Esophagus squamous epithelium (tissue), 5 donors: ENCODE measurements at regions of chr1 and their contacts with region 1.

Region 1: DNA sequence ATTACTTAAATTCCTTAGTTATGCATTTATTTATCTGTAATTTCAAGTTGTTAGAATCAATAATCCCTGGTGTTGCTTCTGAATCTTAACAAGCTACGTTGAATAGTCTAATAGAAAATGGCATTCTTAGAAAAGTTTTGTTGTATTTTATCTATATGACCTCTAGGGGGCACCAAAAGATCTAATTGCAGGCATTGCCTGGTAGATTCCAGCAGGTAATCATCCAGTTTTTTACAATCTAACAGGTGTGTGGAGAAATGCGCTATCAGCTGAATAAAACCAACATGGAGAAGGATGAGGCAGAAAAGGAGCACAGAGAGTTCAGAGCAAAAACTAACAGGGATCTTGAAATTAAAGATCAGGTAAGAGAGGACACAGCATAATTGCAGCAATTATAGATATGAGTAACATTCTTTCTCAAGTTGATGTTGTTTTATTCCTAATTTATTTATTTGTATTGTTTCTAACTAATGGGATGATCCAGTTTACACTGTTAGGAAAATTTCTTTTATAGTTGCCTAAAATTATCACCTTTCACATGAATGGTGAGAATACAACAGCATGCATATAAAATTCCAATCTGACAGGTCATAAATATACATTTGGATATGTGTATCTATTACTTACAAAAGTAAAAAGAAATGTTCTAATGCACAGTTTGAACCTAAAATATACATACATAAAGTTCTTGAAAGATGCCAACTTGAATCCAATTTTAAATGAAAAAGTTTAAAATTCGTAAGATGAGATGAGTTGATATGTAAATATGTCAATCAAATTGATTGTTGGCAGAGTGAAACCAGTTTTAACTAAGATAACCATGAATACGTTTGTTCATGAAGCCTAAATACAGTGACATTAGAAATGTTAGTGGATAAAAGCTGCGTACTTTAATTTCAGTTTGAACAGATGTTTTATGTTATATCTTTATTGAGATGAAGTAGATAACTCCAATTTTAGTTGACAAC is 88.4 kb downstream of the SDCCAG8 start:
- DNase-seq: no peak
- H3K4me3 ChIP-seq: no peak overlapping the region
- H3K27ac ChIP-seq: no peak overlapping the region
- H3K4me1 ChIP-seq: no peaks in the 10 kb centered on the region
- H3K27me3 ChIP-seq: no peaks in the 10 kb centered on the region
- CTCF ChIP-seq: peak; percentile 24 to 75 (median 67)
- POLR2A ChIP-seq: no peak

Region 2: GRCh38 chr1:243287652-243288051 is 56.6 kb before region 1 on chr1:
- intact Hi-C with region 1: no loop called
- DNase-seq: no peak
- H3K4me3 ChIP-seq: no peak overlapping the region
- H3K27ac ChIP-seq: peak overlapping the region in 3 of 4 donors; percentile 3 to 49 (median 12)
- H3K4me1 ChIP-seq: peaks cover 0 to 15% (median 4%) of the 10 kb centered on the region in 3 donors
- H3K27me3 ChIP-seq: no peaks in the 10 kb centered on the region
- CTCF ChIP-seq: no peak
- POLR2A ChIP-seq: no peak

Region 3: DNA sequence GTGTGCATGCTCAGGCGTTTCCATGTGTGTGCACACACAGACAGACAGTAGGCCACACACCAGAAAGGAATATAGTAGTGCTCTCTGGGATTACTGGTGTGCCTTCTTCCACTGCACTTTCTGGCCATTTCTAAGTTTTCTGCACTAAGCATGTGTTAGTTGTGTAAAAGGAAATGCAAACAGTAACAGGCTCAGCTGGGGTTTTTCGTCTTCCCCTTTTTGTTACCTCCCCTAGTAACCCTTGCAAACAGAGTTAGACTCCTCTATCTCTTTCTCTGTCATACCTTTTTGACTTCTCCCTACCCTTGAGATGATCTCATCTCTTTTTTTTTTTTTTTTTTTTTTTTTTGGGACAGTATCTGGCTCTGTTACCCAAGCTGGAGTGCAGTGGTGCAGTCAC is 107.8 kb after region 1 on chr1:
- intact Hi-C with region 1: no loop called
- DNase-seq: no peak
- H3K4me3 ChIP-seq: no peak overlapping the region
- H3K27ac ChIP-seq: no peak overlapping the region
- H3K4me1 ChIP-seq: peaks cover 0 to 18% (median 10%) of the 10 kb centered on the region in 3 donors
- H3K27me3 ChIP-seq: no peaks in the 10 kb centered on the region
- CTCF ChIP-seq: no peak
- POLR2A ChIP-seq: no peak

Region 4: GRCh38 chr1:243482141-243483022 is 138.1 kb after region 1 on chr1:
- intact Hi-C with region 1: no loop called
- DNase-seq: no peak
- H3K4me3 ChIP-seq: peak overlapping the region; percentile 10 to 62 (median 34)
- H3K27ac ChIP-seq: no peak overlapping the region
- H3K4me1 ChIP-seq: peaks cover 5 to 20% (median 7%) of the 10 kb centered on the region in 3 donors
- H3K27me3 ChIP-seq: no peaks in the 10 kb centered on the region
- CTCF ChIP-seq: no peak
- POLR2A ChIP-seq: no peak

Region 5: DNA sequence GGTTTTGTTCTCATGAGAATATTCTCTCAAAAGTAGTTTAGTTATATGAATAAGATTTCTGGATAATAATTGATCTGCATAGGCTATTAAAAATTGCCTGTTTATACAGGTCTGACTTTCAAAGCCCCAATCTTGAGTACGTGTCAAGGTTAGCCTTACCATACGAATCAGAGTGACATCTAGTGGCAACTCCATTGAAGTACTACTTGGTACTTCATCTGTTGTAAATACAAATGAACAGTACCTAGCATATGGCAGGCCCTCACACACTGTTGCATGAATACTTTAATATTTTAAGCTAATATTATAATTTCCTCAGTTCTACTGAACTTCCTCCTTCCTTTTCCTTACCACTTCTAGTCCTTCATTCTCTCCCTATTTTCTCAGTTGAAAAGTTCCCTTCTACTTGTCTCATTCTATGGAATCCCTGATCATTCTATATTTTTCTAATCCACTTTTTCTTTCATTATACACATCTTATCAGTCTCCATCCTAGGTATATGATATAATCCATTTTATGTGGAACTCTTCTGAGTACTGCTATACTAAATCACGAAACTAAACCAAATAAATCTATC is 404.5 kb after region 1 on chr1:
- intact Hi-C with region 1: loop called (anchors 10 kb)
- DNase-seq: no peak
- H3K4me3 ChIP-seq: no peak overlapping the region
- H3K27ac ChIP-seq: no peak overlapping the region
- H3K4me1 ChIP-seq: peaks cover 0 to 9% (median 7%) of the 10 kb centered on the region in 3 donors
- H3K27me3 ChIP-seq: no peaks in the 10 kb centered on the region
- CTCF ChIP-seq: peak; percentile 50 to 74 (median 66)
- POLR2A ChIP-seq: no peak

Region 6: DNA sequence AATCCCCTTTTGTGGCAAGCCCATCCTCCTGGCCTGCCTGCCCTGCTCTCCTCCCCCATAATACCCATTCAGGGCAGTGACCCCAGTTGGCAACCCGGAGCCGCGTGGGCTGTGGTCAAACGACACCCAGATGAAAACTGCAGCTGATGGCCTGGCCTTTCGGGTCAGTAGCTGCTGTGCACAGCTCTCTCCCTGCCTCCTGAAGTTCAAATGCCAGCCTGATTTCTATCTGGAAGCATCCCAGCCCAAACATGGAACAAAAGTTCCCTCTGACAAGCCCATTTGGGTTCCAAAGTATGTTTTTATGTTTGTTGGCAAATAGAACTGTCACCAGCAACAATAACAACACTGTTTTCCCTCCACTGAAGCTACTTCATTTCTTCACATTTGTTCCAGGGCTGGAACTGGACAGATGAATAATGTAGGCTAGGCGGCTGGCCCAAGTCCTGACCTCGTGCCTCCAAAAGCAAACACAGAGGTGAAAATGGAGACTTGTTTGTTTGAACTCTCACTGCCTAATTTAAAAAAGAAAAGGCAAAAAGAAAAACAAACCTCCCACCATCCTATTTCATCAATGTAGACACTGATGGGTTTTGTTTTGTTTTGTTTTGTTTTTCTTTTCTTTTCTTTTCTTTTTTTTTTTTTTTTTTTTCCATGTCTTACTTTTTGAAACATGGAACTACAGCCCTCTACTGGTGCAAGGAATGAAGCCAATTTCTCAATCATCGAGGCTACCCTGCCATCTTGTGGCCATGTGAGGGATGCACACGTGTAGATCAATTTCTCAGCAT is 928.4 kb after region 1 on chr1:
- intact Hi-C with region 1: loop called (anchors 10 kb)
- DNase-seq: no peak
- H3K4me3 ChIP-seq: no peak overlapping the region
- H3K27ac ChIP-seq: peak overlapping the region in 3 of 4 donors; percentile 39 to 70 (median 68)
- H3K4me1 ChIP-seq: peaks cover 0 to 21% (median 13%) of the 10 kb centered on the region in 3 donors
- H3K27me3 ChIP-seq: peaks cover 0 to 3% (median 0%) of the 10 kb centered on the region in 4 donors
- CTCF ChIP-seq: peak; percentile 78 to 98 (median 95)
- POLR2A ChIP-seq: no peak